ENCODE measurements at regions of chr6 and their contacts with region 1.

Region 1: DNA sequence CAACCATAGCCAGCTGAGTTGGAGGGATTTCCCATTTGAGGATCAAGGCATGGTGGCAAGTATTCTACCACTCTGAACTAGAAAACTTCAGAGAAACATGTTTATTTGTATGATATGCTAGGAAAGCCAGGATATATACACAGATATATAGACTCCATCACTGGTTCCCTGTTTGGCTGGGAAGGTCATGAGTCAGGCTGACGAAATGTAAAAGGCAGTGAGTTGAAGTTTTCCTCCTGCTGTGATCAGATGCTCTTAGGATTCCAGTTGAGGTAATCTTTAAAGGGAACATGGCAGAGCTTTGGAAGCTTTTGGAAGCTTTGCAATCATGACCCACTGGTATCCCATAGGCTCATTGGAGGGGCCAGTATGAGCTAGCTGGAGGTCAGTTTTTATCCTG is 1369.1 kb downstream of the EPHA7 start:
- DNase-seq: no peak
- H3K4me3 ChIP-seq: no peak overlapping the region
- CTCF ChIP-seq: no peak
- POLR2A ChIP-seq: no peak

Region 2: DNA sequence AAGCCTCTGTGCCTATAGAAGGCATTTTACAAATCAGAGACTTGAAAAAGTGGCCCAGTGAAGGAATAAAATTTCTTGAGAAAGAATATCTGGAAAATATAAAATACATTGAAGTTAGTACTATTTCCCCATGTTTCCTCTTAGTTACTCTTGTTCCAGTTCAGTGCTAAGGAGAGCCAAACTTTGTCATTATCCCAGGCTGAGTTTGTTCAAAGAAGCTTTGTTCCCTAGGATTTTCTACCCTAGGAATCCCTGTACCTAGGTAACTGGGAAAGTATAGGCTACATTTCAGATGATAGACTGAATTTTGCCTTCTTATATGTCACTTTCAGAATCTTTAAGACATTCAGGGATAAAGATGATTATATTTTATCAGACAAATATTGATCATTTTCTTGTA is 67.7 kb before region 1 on chr6:
- intact Hi-C with region 1: loop called (anchors 5 kb)
- DNase-seq: no peak
- H3K4me3 ChIP-seq: no peak overlapping the region
- CTCF ChIP-seq: no peak
- POLR2A ChIP-seq: no peak

Measured in lower leg skin (tissue), 4 donors.